ENCODE measurements at regions of chr17 and their contacts with region 1.

Region 1: DNA sequence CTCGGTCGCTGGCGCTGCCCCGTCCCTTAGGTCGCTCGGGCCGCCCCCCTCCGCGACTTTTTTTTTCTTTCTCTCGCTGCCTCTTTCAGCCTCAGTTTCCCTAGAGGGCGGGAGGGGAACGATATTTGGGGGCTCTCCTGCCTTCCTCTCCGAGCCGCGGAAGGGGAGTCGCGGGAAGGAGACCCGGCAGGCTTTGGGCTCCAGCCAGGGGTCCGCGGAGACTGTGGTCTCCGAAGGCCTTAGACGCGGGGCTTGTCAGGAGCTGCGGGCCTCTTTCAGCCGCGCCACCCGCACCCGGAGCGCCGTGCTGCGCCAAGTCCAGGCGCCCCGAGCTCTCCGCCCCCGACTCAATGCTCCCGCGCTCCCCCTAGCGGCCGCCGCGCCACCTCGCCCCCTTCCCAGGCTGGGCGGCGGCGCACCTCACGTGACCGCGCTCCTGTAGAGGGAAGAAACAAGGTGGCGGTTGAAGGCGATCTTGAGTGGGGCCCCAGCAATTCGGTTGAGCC is at the start of gene LRRC37B:
- DNase-seq: peak; percentile 79 to 98 (median 88)

Region 2: DNA sequence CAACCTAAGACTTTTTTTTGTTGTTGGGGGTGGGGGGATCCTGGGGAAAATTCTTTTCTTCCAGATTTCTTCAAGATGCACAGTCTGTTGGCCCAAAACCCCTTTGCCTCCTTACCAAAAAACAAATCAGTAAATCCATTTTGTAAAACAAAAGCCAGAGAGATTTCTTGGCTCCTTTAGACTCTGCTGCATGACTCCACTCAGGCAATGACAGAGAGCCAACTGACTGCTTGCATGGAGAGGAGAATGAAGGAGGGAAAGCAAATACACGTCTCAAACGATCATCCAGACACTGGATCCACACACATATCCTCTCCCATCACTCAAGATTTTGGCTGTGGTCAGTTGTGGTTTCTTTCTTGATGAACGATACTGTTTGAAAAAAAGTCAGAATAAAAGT is 161.7 kb before region 1 on chr17:
- intact Hi-C with region 1: no loop called
- DNase-seq: no peak

Region 3: GRCh38 chr17:32142038-32142856 is 135.2 kb after region 1 on chr17 and contains the start of gene RHOT1:
- intact Hi-C with region 1: loop called (anchors 5 kb)
- DNase-seq: peak; percentile 55 to 94 (median 67)